Right cardiac atrium (tissue), 5 donors: ENCODE measurements at regions of chr6 and their contacts with region 1.

Region 1: GRCh38 chr6:122530440-122531046 is 58.9 kb upstream of the SERINC1 start:
- DNase-seq: no peak
- ATAC-seq: peak; percentile 74 to 83
- H3K4me3 ChIP-seq: no peak overlapping the region
- H3K27ac ChIP-seq: no peak overlapping the region
- H3K4me1 ChIP-seq: no peaks in the 10 kb centered on the region
- H3K27me3 ChIP-seq: no peaks in the 10 kb centered on the region

Region 2: GRCh38 chr6:122381497-122382265 is 148.9 kb before region 1 on chr6:
- intact Hi-C with region 1: loop called in 3 of 4 experiments (anchors 5 kb)
- DNase-seq: peak in 2 of 3 donors; percentile 51 to 70
- ATAC-seq: peak; percentile 83 to 86
- H3K4me3 ChIP-seq: no peak overlapping the region
- H3K27ac ChIP-seq: no peak overlapping the region
- H3K4me1 ChIP-seq: no peaks in the 10 kb centered on the region
- H3K27me3 ChIP-seq: no peaks in the 10 kb centered on the region

Region 3: GRCh38 chr6:122491919-122492555 is 38.5 kb before region 1 on chr6:
- intact Hi-C with region 1: loop called in 3 of 4 experiments (anchors 5 kb)
- DNase-seq: peak; percentile 65 to 82 (median 80)
- ATAC-seq: peak; percentile 93 to 95
- H3K4me3 ChIP-seq: no peak overlapping the region
- H3K27ac ChIP-seq: no peak overlapping the region
- H3K4me1 ChIP-seq: no peaks in the 10 kb centered on the region
- H3K27me3 ChIP-seq: no peaks in the 10 kb centered on the region